GM18951 (cell line): ENCODE measurements at regions of chr15 and their contacts with region 1.

Region 1: DNA sequence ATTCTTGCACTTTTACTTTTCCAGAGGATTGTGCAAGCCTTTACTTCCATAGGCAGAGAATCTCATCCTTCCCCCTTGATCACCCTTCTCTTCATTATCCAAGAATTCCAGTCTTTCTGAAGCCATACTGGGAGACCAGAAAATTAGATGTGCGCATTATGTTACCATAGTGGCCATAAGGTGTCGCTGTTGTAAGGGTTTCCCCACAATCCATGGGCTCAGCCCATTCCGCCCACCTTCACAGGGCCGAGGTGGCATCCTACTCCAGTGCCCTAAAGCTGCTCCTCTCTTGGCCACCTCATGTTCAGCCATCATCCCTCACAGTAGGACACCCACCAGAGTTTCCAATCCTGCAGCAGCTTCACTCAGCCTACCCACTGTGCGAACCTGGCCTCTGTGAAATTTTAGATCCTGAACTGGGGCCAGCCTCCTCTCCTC is 35.0 kb downstream of the CTSH start:
- POLR2A ChIP-seq: no peak

Region 2: DNA sequence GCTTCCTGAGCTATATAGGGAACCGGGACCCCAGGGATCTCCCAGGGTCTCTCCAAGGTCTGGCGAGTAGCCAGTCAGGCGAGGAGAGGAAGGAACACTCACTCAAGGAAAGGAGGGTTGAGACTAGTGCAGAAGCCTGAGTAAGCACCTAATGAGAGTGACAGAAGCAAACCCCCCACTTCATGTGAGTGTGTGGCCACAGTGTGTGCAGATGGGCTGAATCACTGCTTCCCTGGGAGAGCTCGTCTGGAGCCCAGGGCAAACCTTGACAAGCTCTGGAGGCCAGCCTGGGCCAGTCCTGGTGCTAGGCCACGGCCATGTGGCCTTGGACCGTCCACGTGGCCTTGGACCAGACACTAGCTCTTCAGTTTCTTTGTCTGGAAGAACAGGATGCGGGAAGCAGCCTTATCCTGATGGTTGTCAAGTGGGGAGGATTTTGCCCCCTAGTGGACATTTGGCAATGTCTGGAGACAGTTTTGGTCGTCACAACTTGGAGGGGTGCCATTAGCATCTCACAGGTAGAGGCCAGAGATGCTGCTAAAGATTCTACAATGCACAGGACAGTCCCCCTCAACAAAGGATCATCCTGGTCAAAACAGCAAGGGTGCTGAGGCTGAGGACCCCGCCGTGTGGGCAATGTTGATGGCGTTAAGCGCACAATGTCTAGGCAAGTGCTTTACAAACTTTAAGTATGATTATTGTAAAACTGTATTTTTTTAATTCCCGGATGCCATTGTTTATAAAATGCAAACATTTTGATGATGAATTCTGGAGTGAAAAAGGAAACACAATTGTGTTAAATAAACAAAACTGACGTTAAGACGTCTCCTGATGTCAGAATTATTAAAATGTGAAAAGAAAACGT is 69.9 kb after region 1 on chr15:
- in situ Hi-C with region 1: loop called (anchors 10 kb)
- POLR2A ChIP-seq: peak; percentile 26

Region 3: GRCh38 chr15:79184465-79184892 is 274.7 kb after region 1 on chr15:
- in situ Hi-C with region 1: loop called (anchors 25 kb)
- POLR2A ChIP-seq: no peak

Region 4: GRCh38 chr15:79243723-79244122 is 333.9 kb after region 1 on chr15:
- in situ Hi-C with region 1: no loop called
- POLR2A ChIP-seq: no peak